PC-3 (cell line): ENCODE measurements at regions of chr2 and their contacts with region 1.

Region 1: GRCh38 chr2:205501826-205502225 is 180.5 kb upstream of the NRP2 start:
- DNase-seq: no peak
- ATAC-seq: no peak
- H3K4me3 ChIP-seq: no peak overlapping the region
- H3K27ac ChIP-seq: no peak overlapping the region
- H3K4me1 ChIP-seq: no peaks in the 10 kb centered on the region
- H3K27me3 ChIP-seq: no peaks in the 10 kb centered on the region
- CTCF ChIP-seq: no peak

Region 2: GRCh38 chr2:205435970-205436369 is 65.9 kb before region 1 on chr2:
- CTCF ChIA-PET with region 1: no interaction called
- POLR2A ChIA-PET with region 1: no interaction called
- intact Hi-C with region 1: loop called (anchors 2 kb)
- DNase-seq: peak; percentile 84
- ATAC-seq: peak; percentile 98
- H3K4me3 ChIP-seq: no peak overlapping the region
- H3K27ac ChIP-seq: no peak overlapping the region
- H3K4me1 ChIP-seq: peaks cover 3% of the 10 kb centered on the region; the same call in 1 of the 2 replicates
- H3K27me3 ChIP-seq: no peaks in the 10 kb centered on the region
- CTCF ChIP-seq: 0 out of 2 replicates have a peak, but pooled peaks have one; percentile 16

Region 3: GRCh38 chr2:205748639-205749477 is 247.0 kb after region 1 on chr2:
- CTCF ChIA-PET with region 1: no interaction called
- POLR2A ChIA-PET with region 1: no interaction called
- intact Hi-C with region 1: no loop called
- DNase-seq: peak; percentile 93
- ATAC-seq: peak; percentile 72
- H3K4me3 ChIP-seq: 0 out of 2 replicates have a peak overlapping the region, but pooled peaks have one; percentile 9
- H3K27ac ChIP-seq: peak overlapping the region; percentile 99
- H3K4me1 ChIP-seq: peaks cover 69% of the 10 kb centered on the region
- H3K27me3 ChIP-seq: no peaks in the 10 kb centered on the region
- CTCF ChIP-seq: no peak

Region 4: DNA sequence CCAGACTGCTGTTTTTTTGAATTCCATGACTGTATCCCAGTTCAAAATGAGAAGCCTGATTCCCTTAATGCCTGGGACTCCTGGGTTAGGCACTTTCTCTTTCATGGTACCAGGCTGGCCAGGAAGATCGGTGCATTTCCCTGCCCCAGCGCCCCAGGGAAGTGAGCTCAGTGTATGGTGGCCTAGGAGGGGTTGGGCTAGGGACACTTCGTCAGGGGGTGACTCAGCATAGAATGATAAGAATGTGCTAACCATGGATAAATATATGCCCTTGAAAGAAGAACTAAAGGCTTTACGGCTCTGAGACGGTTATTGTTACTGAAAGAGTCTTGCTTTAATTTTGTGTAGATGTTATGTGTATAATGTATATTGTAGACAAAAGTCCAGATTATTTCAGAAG is 1113.0 kb after region 1 on chr2:
- CTCF ChIA-PET with region 1: no interaction called
- POLR2A ChIA-PET with region 1: no interaction called
- intact Hi-C with region 1: no loop called
- DNase-seq: peak; percentile 88
- ATAC-seq: peak; percentile 57
- H3K4me3 ChIP-seq: peak overlapping the region; percentile 3; the same call in 1 of the 2 replicates
- H3K27ac ChIP-seq: peak overlapping the region; percentile 84
- H3K4me1 ChIP-seq: peaks cover 73% of the 10 kb centered on the region
- H3K27me3 ChIP-seq: no peaks in the 10 kb centered on the region
- CTCF ChIP-seq: no peak